ENCODE measurements at regions of chr5 and their contacts with region 1.

Region 1: GRCh38 chr5:73215891-73216610 is 43.1 kb downstream of the TMEM174 start:
- DNase-seq: peak; percentile 84
- ATAC-seq: peak; percentile 90
- H3K4me3 Mint-ChIP-seq: peak overlapping the region; percentile 64
- H3K27ac Mint-ChIP-seq: no peak overlapping the region
- H3K4me1 Mint-ChIP-seq: peaks cover 23% of the 10 kb centered on the region
- H3K27me3 Mint-ChIP-seq: peaks cover 68% of the 10 kb centered on the region
- CTCF ChIP-seq: peak; percentile 71; the same call in 1 of the 2 replicates

Region 2: DNA sequence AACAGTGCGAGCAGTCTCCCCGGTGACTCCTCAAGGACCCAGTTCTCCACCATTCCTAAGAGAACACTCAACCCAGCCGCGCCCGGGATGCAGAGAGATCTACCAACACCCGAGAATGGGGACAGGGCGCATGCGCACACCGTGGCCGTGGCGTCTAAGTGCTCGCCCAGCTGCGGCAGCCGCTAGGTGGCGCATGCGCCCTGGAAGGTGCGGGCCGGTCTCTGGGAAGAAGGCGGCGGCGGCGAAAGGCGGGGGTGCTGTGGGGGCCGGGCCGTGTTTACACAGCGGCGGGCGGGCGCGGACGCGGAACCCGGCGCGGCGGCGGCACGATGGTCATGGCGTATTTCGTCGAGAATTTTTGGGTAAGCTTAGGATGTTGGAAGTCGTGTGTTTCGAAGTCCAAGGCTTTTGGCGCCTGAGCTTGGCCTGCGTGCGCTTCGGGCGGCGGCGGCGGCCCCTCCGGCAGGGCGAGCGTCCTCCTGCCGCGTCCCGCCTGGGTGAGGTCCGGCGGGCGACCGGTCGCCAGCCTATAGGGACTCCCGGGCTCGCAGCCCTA is 260.2 kb before region 1 on chr5 and contains the start of gene FCHO2:
- CTCF ChIA-PET with region 1: interaction called, 17 read pairs
- POLR2A ChIA-PET with region 1: interaction called, 3 read pairs
- DNase-seq: peak; percentile 99
- ATAC-seq: peak; percentile 86
- H3K4me3 Mint-ChIP-seq: peak within 1 kb of the TSS; percentile 86
- H3K27ac Mint-ChIP-seq: peak within 1 kb of the TSS; percentile 89
- H3K4me1 Mint-ChIP-seq: peaks cover 31% of the 10 kb centered on the region
- H3K27me3 Mint-ChIP-seq: no peaks in the 10 kb centered on the region; the same call in 1 of the 2 replicates
- CTCF ChIP-seq: peak; percentile 88
- total RNA-seq, gene FCHO2: 11.0 to 14.9 TPM (median 13.9 TPM) in 3 replicates

Region 3: DNA sequence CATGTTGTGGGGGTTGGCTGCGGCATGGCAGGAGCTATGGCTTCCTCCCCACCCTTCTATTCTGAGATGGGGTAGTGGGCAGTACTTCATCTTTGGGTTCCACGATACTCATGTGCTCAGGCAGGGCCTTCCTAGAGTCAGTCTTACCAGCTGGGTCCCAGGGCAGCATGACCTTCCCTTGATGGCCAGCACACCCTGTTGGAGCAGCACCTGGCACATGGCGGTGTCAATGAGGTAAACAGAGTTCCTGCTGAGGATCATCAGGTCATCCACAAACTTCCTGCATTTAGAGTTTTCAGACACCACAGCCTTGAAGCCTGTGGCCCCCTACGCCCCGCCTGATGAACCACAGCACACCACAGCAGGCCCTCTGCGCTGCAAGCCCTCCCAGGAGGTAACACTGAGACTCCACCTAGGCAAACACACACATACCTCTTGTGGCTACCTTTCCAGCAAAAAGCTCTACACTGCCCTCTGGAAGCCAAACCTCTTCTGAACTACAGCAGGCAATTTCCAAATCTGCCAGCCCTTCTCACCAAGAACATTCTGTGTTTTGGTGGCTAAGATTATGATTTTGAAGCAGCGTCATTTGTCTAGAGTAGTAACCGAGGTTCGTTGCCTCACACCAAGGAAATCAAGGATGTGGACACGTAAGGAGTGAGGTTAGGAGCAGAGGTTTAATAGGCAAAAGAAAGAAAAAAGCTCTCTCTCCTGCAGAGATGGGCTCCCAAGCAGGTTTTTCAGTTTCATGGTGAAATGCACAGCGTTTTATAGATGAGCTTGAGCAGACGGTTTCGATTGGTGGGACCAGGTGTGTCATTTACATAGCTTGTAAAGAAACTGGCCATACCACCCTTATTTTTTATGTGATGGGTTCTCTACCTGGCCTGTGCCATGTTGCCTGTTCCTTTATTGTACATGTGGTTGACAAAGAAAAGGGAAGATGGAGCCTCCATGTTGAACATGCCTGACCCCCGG is 63.4 kb before region 1 on chr5:
- CTCF ChIA-PET with region 1: interaction called, 15 read pairs
- POLR2A ChIA-PET with region 1: no interaction called
- DNase-seq: no peak
- ATAC-seq: peak; percentile 80
- H3K4me3 Mint-ChIP-seq: no peak overlapping the region
- H3K27ac Mint-ChIP-seq: no peak overlapping the region
- H3K4me1 Mint-ChIP-seq: peaks cover 13% of the 10 kb centered on the region
- H3K27me3 Mint-ChIP-seq: no peaks in the 10 kb centered on the region
- CTCF ChIP-seq: no peak

Region 4: GRCh38 chr5:73233347-73234200 is 17.5 kb after region 1 on chr5:
- CTCF ChIA-PET with region 1: interaction called, 31 read pairs
- POLR2A ChIA-PET with region 1: no interaction called
- DNase-seq: peak; percentile 42
- ATAC-seq: peak; percentile 46
- H3K4me3 Mint-ChIP-seq: peak overlapping the region; percentile 67
- H3K27ac Mint-ChIP-seq: no peak overlapping the region
- H3K4me1 Mint-ChIP-seq: peaks cover 35% of the 10 kb centered on the region
- H3K27me3 Mint-ChIP-seq: peaks cover 85% of the 10 kb centered on the region
- CTCF ChIP-seq: no peak

Region 5: GRCh38 chr5:73292806-73293459 is 76.9 kb after region 1 on chr5:
- CTCF ChIA-PET with region 1: interaction called, 33 read pairs
- POLR2A ChIA-PET with region 1: no interaction called
- DNase-seq: no peak
- ATAC-seq: no peak
- H3K4me3 Mint-ChIP-seq: no peak overlapping the region
- H3K27ac Mint-ChIP-seq: no peak overlapping the region
- H3K4me1 Mint-ChIP-seq: peaks cover 41% of the 10 kb centered on the region
- H3K27me3 Mint-ChIP-seq: peaks cover 64% of the 10 kb centered on the region
- CTCF ChIP-seq: no peak

Region 6: GRCh38 chr5:73327908-73328455 is 111.9 kb after region 1 on chr5:
- CTCF ChIA-PET with region 1: no interaction called
- POLR2A ChIA-PET with region 1: no interaction called
- DNase-seq: no peak
- ATAC-seq: no peak
- H3K4me3 Mint-ChIP-seq: no peak overlapping the region
- H3K27ac Mint-ChIP-seq: no peak overlapping the region
- H3K4me1 Mint-ChIP-seq: peaks cover 14% of the 10 kb centered on the region
- H3K27me3 Mint-ChIP-seq: no peaks in the 10 kb centered on the region; the same call in 1 of the 2 replicates
- CTCF ChIP-seq: no peak

Region 7: DNA sequence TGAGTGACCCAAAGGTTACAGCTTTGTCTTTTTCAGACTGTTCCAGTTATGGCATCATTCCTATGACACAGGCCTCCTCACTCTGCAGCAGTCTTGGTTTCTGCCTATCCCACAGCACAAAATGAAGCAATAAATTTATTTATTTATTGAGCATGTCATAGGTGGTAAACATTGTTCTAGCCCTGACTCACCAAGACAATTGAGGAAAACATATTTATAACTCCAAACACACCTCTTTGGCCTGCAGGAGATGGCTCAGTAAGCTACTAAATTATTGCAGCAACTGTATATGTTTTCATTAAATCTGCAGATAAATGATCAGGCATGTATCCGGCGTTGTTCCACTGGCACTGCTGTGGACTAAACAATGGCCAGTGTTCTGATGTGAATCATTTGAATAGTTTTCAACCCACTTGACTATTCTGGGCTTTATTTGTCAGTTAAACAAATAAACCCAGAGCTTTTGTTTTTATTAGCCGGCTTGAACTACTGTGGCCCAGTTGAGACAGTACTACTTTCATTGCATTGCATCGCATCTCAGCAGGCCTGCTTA is 149.3 kb after region 1 on chr5:
- CTCF ChIA-PET with region 1: no interaction called
- POLR2A ChIA-PET with region 1: no interaction called
- DNase-seq: no peak
- ATAC-seq: no peak
- H3K4me3 Mint-ChIP-seq: no peak overlapping the region
- H3K27ac Mint-ChIP-seq: no peak overlapping the region
- H3K4me1 Mint-ChIP-seq: peaks cover 6% of the 10 kb centered on the region
- H3K27me3 Mint-ChIP-seq: peaks cover 14% of the 10 kb centered on the region
- CTCF ChIP-seq: no peak

Region 8: GRCh38 chr5:73448463-73449136 is 232.5 kb after region 1 on chr5 and contains the start of gene FOXD1:
- CTCF ChIA-PET with region 1: interaction called, 38 read pairs
- POLR2A ChIA-PET with region 1: no interaction called
- DNase-seq: peak; percentile 85
- ATAC-seq: peak; percentile 72
- H3K4me3 Mint-ChIP-seq: peak within 1 kb of the TSS; percentile 74
- H3K27ac Mint-ChIP-seq: no peak within 1 kb of the TSS
- H3K4me1 Mint-ChIP-seq: peaks cover 43% of the 10 kb centered on the region
- H3K27me3 Mint-ChIP-seq: peaks cover 93% of the 10 kb centered on the region
- CTCF ChIP-seq: no peak
- total RNA-seq, gene FOXD1: 7.0 to 10.3 TPM (median 7.9 TPM) in 3 replicates

Region 9: GRCh38 chr5:73892806-73893205 is 676.8 kb after region 1 on chr5:
- CTCF ChIA-PET with region 1: no interaction called
- POLR2A ChIA-PET with region 1: no interaction called
- DNase-seq: no peak
- ATAC-seq: no peak
- H3K4me3 Mint-ChIP-seq: no peak overlapping the region
- H3K27ac Mint-ChIP-seq: no peak overlapping the region
- H3K4me1 Mint-ChIP-seq: no peaks in the 10 kb centered on the region
- H3K27me3 Mint-ChIP-seq: no peaks in the 10 kb centered on the region
- CTCF ChIP-seq: no peak

Measured in WTC11 (cell line).